RWPE1 (cell line): ENCODE measurements at regions of chr4 and their contacts with region 1.

Region 1: GRCh38 chr4:168815379-168816345 is 194.4 kb downstream of the CBR4 start:
- DNase-seq: no peak
- H3K27ac ChIP-seq: no peak overlapping the region
- CTCF ChIP-seq: no peak

Region 2: GRCh38 chr4:168335621-168336020 is 480.0 kb before region 1 on chr4:
- CTCF ChIA-PET with region 1: no interaction called
- POLR2A ChIA-PET with region 1: interaction called, 11 read pairs
- DNase-seq: no peak
- H3K27ac ChIP-seq: no peak overlapping the region
- CTCF ChIP-seq: no peak

Region 3: GRCh38 chr4:168705121-168705520 is 110.5 kb before region 1 on chr4:
- CTCF ChIA-PET with region 1: interaction called, 10 read pairs
- POLR2A ChIA-PET with region 1: no interaction called
- DNase-seq: no peak
- H3K27ac ChIP-seq: no peak overlapping the region
- CTCF ChIP-seq: no peak

Region 4: GRCh38 chr4:168831919-168832762 is 16.5 kb after region 1 on chr4:
- CTCF ChIA-PET with region 1: interaction called, 8 read pairs
- POLR2A ChIA-PET with region 1: interaction called, 23 read pairs
- DNase-seq: peak; percentile 87
- H3K27ac ChIP-seq: peak overlapping the region; percentile 92
- CTCF ChIP-seq: no peak